Activated naive CD4-positive, alpha-beta T cell treated with anti-CD3 and anti-CD28 coated beads for 36 hours (primary cell): ENCODE measurements at regions of chr5 and their contacts with region 1.

Region 1: DNA sequence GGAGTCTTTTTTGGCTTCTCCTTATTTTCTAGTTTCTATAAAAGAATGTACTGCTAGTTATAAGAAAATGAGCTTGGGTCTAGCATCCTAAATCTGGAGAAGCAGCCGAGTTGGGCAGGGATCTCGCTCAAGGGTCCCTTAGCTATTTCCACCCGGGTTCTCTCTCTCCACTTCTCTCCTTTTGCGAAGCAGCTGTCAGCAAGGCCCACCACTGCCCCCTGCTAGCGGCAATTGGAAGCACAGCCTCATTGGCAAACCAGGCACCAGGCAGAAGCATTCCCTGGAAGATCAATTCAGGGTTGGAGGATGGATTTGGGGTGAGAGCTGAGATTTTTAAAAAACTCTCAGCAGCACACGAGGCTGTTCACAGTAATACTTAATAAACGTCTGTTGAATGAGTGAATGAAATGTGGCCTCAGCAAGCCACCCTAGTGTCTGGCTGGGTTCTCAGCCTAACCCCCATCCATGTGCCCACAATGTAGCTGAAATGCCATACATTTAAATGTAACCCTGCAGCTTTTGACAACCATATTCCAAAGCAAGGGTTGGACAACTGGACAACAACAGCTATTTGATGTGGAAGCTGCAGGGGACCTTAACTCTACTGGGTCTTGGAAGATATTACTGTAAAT is 34.6 kb upstream of the TNIP1 start:
- DNase-seq: peak; percentile 84
- H3K4me3 Mint-ChIP-seq: no peak overlapping the region
- H3K27ac Mint-ChIP-seq: no peak overlapping the region
- H3K4me1 Mint-ChIP-seq: peaks cover 3% of the 10 kb centered on the region
- H3K27me3 Mint-ChIP-seq: no peaks in the 10 kb centered on the region

Region 2: DNA sequence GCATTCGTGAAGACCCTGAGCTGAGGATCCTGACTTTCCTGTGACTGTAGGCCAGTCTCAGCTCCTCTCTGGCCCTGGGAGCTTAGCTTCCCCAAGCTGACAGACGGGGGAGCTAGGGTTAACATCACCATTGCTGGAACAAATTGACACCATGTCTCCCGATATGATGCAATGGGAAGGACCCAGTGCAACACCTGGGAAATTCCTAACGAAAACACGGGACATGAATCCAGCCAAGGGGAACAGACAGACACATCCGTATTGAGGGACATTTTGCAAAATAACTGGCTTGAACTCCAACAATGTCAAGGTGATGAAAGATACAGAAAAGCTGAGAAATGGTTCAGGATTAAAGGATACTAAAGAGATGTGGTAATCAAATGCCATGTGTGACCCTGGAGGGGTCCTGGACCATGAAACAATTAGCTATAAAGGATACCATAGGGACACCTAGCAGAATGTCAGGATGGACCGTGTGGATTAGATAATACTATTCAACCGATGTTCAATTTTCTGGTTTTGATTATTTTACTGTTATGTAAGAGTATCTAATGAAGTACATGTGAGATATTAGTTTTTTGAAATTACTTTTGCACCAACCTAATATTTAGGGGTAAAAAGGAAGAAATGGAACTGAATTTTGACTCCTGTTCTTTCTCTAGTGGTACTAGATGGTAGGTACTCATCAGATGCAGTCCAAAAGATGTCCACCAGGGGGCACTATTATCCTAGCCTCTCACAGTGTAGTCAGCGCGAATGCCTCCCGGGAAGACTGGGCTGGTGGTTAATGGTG is 554.8 kb before region 1 on chr5:
- CTCF ChIA-PET with region 1: interaction called, 3 read pairs
- intact Hi-C with region 1: loop called (anchors 2 kb)
- DNase-seq: peak; percentile 96
- H3K4me3 Mint-ChIP-seq: no peak overlapping the region
- H3K27ac Mint-ChIP-seq: no peak overlapping the region
- H3K4me1 Mint-ChIP-seq: no peaks in the 10 kb centered on the region
- H3K27me3 Mint-ChIP-seq: no peaks in the 10 kb centered on the region

Region 3: GRCh38 chr5:151002250-151002649 is 113.1 kb before region 1 on chr5:
- CTCF ChIA-PET with region 1: interaction called, 9 read pairs
- intact Hi-C with region 1: loop called (anchors 1 kb)
- DNase-seq: peak; percentile 29
- H3K4me3 Mint-ChIP-seq: no peak overlapping the region
- H3K27ac Mint-ChIP-seq: no peak overlapping the region
- H3K4me1 Mint-ChIP-seq: no peaks in the 10 kb centered on the region
- H3K27me3 Mint-ChIP-seq: no peaks in the 10 kb centered on the region

Region 4: GRCh38 chr5:151058891-151059489 is 56.4 kb before region 1 on chr5:
- CTCF ChIA-PET with region 1: interaction called, 309 read pairs
- intact Hi-C with region 1: loop called (anchors 1 kb)
- DNase-seq: peak; percentile 27
- H3K4me3 Mint-ChIP-seq: peak overlapping the region; percentile 19
- H3K27ac Mint-ChIP-seq: peak overlapping the region; percentile 93
- H3K4me1 Mint-ChIP-seq: peaks cover 49% of the 10 kb centered on the region
- H3K27me3 Mint-ChIP-seq: no peaks in the 10 kb centered on the region

Region 5: DNA sequence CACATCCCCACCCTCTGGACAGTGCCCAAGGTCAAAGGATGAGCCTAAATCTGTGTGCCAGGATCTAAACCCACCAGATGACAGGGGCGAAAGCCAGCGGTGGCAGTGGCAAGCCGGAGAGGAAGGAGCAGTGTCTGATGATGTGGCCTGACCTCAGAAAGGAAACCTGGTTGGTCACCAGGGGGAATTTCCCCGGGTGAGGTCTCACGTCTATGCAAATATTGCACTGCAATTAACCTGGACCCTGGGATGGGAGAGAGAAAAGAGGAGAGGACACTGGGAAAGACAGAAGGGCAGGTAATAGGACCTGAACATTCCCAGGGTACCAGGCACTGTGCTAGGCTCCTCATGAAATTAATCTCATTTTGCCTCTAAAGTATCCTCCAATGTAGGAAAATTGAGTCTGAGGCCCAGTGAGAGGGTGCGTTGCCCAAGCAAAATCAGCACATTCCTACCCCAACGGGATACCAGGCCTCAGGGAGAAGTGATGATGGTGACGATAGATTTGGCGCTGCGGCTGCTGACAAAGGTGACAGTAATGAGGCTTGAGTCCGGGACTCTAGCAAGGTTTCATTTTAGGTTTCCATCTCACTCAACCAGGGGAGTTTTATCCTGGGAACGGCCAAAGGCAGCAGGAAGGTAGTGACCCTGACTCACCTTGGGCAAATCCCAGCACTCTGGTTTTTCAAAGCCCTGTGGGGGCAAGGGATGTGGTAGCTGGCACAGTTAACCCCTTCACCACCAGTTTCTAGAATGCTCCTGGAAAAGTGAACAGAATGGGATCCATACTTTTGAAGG is 21.1 kb before region 1 on chr5:
- CTCF ChIA-PET with region 1: interaction called, 53 read pairs
- intact Hi-C with region 1: no loop called
- DNase-seq: peak; percentile 76
- H3K4me3 Mint-ChIP-seq: peak overlapping the region; percentile 8
- H3K27ac Mint-ChIP-seq: peak overlapping the region; percentile 86
- H3K4me1 Mint-ChIP-seq: peaks cover 68% of the 10 kb centered on the region
- H3K27me3 Mint-ChIP-seq: no peaks in the 10 kb centered on the region

Region 6: GRCh38 chr5:151141535-151141934 is 26.1 kb after region 1 on chr5:
- CTCF ChIA-PET with region 1: interaction called, 29 read pairs
- intact Hi-C with region 1: no loop called
- DNase-seq: peak; percentile 88
- H3K4me3 Mint-ChIP-seq: peak overlapping the region; percentile 67
- H3K27ac Mint-ChIP-seq: peak overlapping the region; percentile 82
- H3K4me1 Mint-ChIP-seq: peaks cover 86% of the 10 kb centered on the region
- H3K27me3 Mint-ChIP-seq: no peaks in the 10 kb centered on the region